ENCODE measurements at regions of chr3 and their contacts with region 1.

Region 1: GRCh38 chr3:64030741-64031140 is 7.4 kb upstream of the PSMD6 start:
- DNase-seq: peak; percentile 80
- ATAC-seq: peak; percentile 99
- H3K4me3 ChIP-seq: peak overlapping the region; percentile 41
- H3K27ac ChIP-seq: no peak overlapping the region
- H3K4me1 ChIP-seq: no peaks in the 10 kb centered on the region
- H3K27me3 ChIP-seq: peaks cover 4% of the 10 kb centered on the region
- CTCF ChIP-seq: peak; percentile 88

Region 2: DNA sequence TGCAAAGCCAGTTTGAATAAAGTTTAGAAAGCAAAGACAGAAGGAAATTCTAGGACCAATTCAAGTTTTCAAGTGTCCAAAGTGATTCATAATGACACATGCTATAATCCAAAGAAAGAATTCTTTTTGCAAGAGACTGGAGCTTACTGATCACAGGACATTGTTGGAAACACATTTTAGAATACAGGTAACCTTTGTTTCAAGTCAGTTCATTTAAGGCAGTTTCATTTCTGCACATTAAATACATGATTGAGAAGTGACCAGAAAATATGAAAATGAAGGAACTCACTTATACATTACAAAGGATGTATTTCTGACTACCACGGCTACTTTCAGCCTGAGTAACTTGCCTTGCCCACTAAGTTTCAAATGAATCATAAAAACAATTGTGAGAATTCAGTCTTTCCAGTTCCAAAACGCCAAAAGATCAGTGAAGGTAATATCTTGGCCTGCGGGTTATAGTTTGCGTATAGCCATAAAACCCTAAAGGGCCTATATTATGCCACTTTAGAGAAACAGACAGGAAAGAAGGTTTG is 145.8 kb after region 1 on chr3:
- intact Hi-C with region 1: no loop called
- DNase-seq: no peak
- ATAC-seq: no peak
- H3K4me3 ChIP-seq: no peak overlapping the region
- H3K27ac ChIP-seq: no peak overlapping the region
- H3K4me1 ChIP-seq: no peaks in the 10 kb centered on the region
- H3K27me3 ChIP-seq: no peaks in the 10 kb centered on the region
- CTCF ChIP-seq: no peak

Region 3: GRCh38 chr3:64399205-64399800 is 368.6 kb after region 1 on chr3:
- intact Hi-C with region 1: loop called (anchors 5 kb)
- DNase-seq: no peak
- ATAC-seq: peak; percentile 86
- H3K4me3 ChIP-seq: no peak overlapping the region
- H3K27ac ChIP-seq: no peak overlapping the region
- H3K4me1 ChIP-seq: peaks cover 4% of the 10 kb centered on the region
- H3K27me3 ChIP-seq: no peaks in the 10 kb centered on the region
- CTCF ChIP-seq: peak; percentile 69

Region 4: GRCh38 chr3:64489361-64490044 is 458.8 kb after region 1 on chr3:
- intact Hi-C with region 1: loop called (anchors 5 kb)
- DNase-seq: peak; percentile 84
- ATAC-seq: peak; percentile 86
- H3K4me3 ChIP-seq: no peak overlapping the region
- H3K27ac ChIP-seq: no peak overlapping the region
- H3K4me1 ChIP-seq: no peaks in the 10 kb centered on the region
- H3K27me3 ChIP-seq: peaks cover 3% of the 10 kb centered on the region
- CTCF ChIP-seq: no peak

Measured in upper lobe of right lung (tissue), 1 donor.